IMR-90 (cell line): ENCODE measurements at regions of chr12 and their contacts with region 1.

Region 1: DNA sequence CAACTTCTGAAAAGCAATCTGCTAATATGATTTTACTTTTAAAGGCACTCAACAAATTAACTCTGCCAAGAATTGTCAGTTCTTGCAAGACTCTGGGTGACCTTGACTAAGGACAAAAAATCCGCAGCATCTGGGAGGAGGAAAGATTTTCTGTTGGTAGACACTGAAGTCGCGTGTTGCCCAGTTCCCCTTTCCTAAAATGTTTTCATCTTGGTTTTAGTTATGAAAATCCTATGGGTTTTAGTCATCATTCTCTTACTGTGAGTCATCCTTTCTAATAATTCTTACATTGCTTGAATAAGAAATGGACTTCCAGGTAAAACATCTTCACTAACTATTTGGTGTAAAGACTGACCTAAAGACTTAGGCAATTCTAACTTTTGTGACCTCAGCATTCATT is 9.1 kb downstream of the GSG1 start:
- DNase-seq: peak; percentile 70
- ATAC-seq: peak; percentile 22
- H3K4me3 ChIP-seq: no peak overlapping the region
- H3K27ac ChIP-seq: peak overlapping the region; percentile 26; the same call in 1 of the 2 replicates
- H3K4me1 ChIP-seq: peaks cover 27% of the 10 kb centered on the region
- H3K27me3 ChIP-seq: no peaks in the 10 kb centered on the region
- CTCF ChIP-seq: no peak
- POLR2A ChIP-seq: no peak
- RAD21 ChIP-seq: no peak

Region 2: GRCh38 chr12:12786716-12787601 is 307.4 kb before region 1 on chr12:
- CTCF ChIA-PET with region 1: no interaction called
- POLR2A ChIA-PET with region 1: no interaction called
- dilution Hi-C with region 1: no loop called
- in situ Hi-C with region 1: no loop called
- intact Hi-C with region 1: loop called (anchors 5 kb)
- DNase-seq: peak; percentile 81
- ATAC-seq: peak; percentile 93
- H3K4me3 ChIP-seq: peak overlapping the region; percentile 60
- H3K27ac ChIP-seq: peak overlapping the region; percentile 90
- H3K4me1 ChIP-seq: peaks cover 15% of the 10 kb centered on the region
- H3K27me3 ChIP-seq: no peaks in the 10 kb centered on the region
- CTCF ChIP-seq: no peak
- POLR2A ChIP-seq: no peak
- RAD21 ChIP-seq: no peak

Region 3: DNA sequence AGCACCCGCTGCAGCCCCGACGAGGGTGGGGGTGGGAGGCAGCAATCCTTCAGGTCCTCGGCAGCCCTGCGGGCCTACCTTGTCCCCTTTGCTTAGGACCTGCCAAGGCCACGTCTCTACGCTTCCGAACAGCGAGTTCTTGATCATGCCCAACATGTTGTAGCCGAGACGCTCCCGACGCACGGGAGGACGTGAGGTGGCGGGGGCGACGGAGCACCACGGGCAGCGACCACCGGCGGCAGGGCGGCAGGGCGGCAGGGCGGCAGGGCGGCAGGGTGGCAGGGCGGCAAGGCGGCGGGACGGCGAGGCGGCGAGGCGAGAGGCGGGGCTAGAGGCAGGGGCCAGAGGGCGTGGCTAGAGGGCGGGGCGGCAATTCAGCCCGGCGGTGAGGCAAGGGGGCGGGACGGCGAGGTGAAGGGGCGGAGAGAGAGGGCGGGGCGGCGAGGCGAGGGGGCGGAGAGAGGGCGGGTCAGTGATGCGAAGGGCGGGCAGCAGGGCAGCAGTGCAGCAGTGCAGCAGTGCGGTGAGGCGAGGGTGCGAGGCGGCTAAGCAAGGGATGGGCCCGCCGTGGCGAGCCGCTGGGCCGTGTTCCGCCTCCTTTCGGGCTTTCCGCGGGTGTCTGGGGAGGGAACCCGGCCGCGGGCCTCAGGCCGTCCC is 94.3 kb before region 1 on chr12 and contains the start of gene HEBP1:
- CTCF ChIA-PET with region 1: no interaction called
- POLR2A ChIA-PET with region 1: no interaction called
- dilution Hi-C with region 1: no loop called
- in situ Hi-C with region 1: no loop called
- intact Hi-C with region 1: loop called (anchors 2 kb)
- DNase-seq: peak; percentile 84
- ATAC-seq: peak; percentile 90
- H3K4me3 ChIP-seq: peak within 1 kb of the TSS; percentile 97
- H3K27ac ChIP-seq: peak within 1 kb of the TSS; percentile 87
- H3K4me1 ChIP-seq: peaks cover 20% of the 10 kb centered on the region
- H3K27me3 ChIP-seq: no peaks in the 10 kb centered on the region
- CTCF ChIP-seq: no peak
- POLR2A ChIP-seq: peak; percentile 75
- RAD21 ChIP-seq: no peak
- total RNA-seq, gene HEBP1: 14.7 and 18.8 TPM in 2 replicates

Region 4: GRCh38 chr12:13044002-13044905 is 50.1 kb before region 1 on chr12 and contains the start of gene FAM234B:
- CTCF ChIA-PET with region 1: no interaction called
- POLR2A ChIA-PET with region 1: interaction called, 3 read pairs
- dilution Hi-C with region 1: no loop called
- in situ Hi-C with region 1: no loop called
- intact Hi-C with region 1: loop called (anchors 5 kb)
- DNase-seq: peak; percentile 62
- ATAC-seq: peak; percentile 99
- H3K4me3 ChIP-seq: peak within 1 kb of the TSS; percentile 95
- H3K27ac ChIP-seq: peak within 1 kb of the TSS; percentile 50
- H3K4me1 ChIP-seq: no peaks in the 10 kb centered on the region
- H3K27me3 ChIP-seq: no peaks in the 10 kb centered on the region
- CTCF ChIP-seq: no peak
- POLR2A ChIP-seq: no peak
- RAD21 ChIP-seq: no peak
- total RNA-seq, gene FAM234B: 6.7 and 8.6 TPM in 2 replicates

Region 5: GRCh38 chr12:13196130-13196921 is 102.0 kb after region 1 on chr12 and contains the start of gene EMP1:
- CTCF ChIA-PET with region 1: interaction called, 4 read pairs
- POLR2A ChIA-PET with region 1: interaction called, 4 read pairs
- dilution Hi-C with region 1: no loop called
- in situ Hi-C with region 1: no loop called
- intact Hi-C with region 1: loop called (anchors 1 kb)
- DNase-seq: peak; percentile 100
- ATAC-seq: peak; percentile 70
- H3K4me3 ChIP-seq: peak within 1 kb of the TSS; percentile 73
- H3K27ac ChIP-seq: peak within 1 kb of the TSS; percentile 94
- H3K4me1 ChIP-seq: peaks cover 20% of the 10 kb centered on the region
- H3K27me3 ChIP-seq: no peaks in the 10 kb centered on the region
- CTCF ChIP-seq: no peak
- POLR2A ChIP-seq: peak; percentile 99
- RAD21 ChIP-seq: 0 out of 2 replicates have a peak, but pooled peaks have one; percentile 3
- total RNA-seq, gene EMP1: 137 and 570 TPM in 2 replicates

Region 6: GRCh38 chr12:14043811-14044530 is 949.6 kb after region 1 on chr12:
- CTCF ChIA-PET with region 1: no interaction called
- POLR2A ChIA-PET with region 1: no interaction called
- dilution Hi-C with region 1: no loop called
- in situ Hi-C with region 1: no loop called
- intact Hi-C with region 1: no loop called
- DNase-seq: no peak
- ATAC-seq: no peak
- H3K4me3 ChIP-seq: no peak overlapping the region
- H3K27ac ChIP-seq: no peak overlapping the region
- H3K4me1 ChIP-seq: no peaks in the 10 kb centered on the region
- H3K27me3 ChIP-seq: no peaks in the 10 kb centered on the region
- CTCF ChIP-seq: no peak
- POLR2A ChIP-seq: no peak
- RAD21 ChIP-seq: no peak